ENCODE measurements at regions of chr15 and their contacts with region 1.

Region 1: DNA sequence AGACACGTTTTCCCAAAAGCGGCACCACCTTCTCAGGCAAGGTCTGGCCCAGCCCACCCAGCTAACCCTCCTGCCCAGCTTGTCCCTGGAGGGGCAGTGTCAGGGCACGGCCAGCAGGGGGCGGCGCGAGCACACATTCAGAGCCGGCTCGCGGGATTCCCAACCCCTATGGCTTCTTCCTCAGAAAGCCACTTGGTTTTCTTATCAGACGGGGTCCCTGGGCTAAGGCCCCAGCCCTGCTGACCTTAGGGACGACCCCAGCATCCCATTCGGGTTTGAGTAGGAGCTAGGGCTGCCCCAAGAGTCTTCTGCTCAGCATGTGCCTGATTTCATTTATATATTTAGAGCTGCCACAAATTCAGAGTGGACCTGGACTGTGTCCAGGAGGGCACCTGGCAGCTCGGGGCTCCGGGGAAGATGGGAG is 14.5 kb downstream of the RLBP1 start:
- DNase-seq: peak; percentile 93
- H3K4me3 ChIP-seq: peak overlapping the region; percentile 32 to 36; a peak in 3 of 4 replicates
- H3K27ac ChIP-seq: no peak overlapping the region
- H3K4me1 ChIP-seq: no peaks in the 10 kb centered on the region; a peak in 1 of 4 replicates
- H3K27me3 ChIP-seq: no peaks in the 10 kb centered on the region
- CTCF ChIP-seq: peak; percentile 96
- EP300 ChIP-seq: no peak
- RAD21 ChIP-seq: peak; percentile 85

Region 2: DNA sequence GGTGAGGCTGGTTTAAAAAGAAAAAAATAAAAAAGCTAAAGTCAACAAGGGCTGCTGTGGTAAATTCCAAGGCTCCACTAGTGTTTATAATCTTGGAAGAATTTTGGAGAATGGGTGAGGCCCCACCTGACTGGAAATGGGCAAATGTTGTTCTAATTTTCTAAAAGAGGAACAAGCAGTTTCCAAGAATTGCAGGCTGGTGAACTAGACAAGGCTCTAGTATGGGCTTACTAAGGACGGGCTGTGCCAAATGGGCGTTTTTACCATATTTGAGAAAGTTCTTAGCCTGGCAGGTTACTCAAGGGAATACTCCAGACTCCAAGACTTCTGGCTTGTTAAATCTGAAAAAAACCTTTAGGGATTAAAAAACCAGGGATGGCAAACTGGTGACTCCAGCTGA is 185.7 kb before region 1 on chr15:
- CTCF ChIA-PET with region 1: no interaction called
- POLR2A ChIA-PET with region 1: no interaction called
- DNase-seq: no peak
- H3K4me3 ChIP-seq: no peak overlapping the region
- H3K27ac ChIP-seq: no peak overlapping the region
- H3K4me1 ChIP-seq: peaks cover 0 to 11% of the 10 kb centered on the region in 2 experiments; a peak in 1 of 4 replicates
- H3K27me3 ChIP-seq: no peaks in the 10 kb centered on the region
- CTCF ChIP-seq: no peak
- EP300 ChIP-seq: no peak
- RAD21 ChIP-seq: no peak

Region 3: DNA sequence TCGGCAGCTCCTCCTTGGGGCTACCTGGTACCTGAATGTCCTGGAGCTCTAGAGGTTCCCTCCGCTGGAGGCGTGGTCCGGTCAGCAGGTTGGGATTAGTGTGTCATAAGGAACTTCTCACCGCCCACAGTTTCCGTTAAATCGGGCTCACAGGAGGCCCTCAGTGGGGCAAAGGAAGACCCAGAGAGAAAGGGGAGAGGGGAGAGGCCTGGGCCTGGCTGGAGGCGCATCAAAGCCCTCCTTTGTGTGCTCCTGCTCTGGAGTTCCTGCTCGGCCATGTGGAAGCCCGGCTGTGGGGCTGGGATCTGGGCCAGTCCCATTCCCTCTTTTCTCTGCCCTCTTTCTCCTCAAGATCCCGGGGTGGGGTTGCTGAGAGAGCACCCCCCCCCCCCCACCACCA is 14.6 kb after region 1 on chr15 and contains the start of gene RLBP1:
- CTCF ChIA-PET with region 1: interaction called, 56 read pairs
- POLR2A ChIA-PET with region 1: no interaction called
- DNase-seq: no peak
- H3K4me3 ChIP-seq: no peak within 1 kb of the TSS
- H3K27ac ChIP-seq: no peak within 1 kb of the TSS
- H3K4me1 ChIP-seq: no peaks in the 10 kb centered on the region
- H3K27me3 ChIP-seq: no peaks in the 10 kb centered on the region; the same call in 1 of the 2 replicates
- CTCF ChIP-seq: no peak
- EP300 ChIP-seq: no peak
- RAD21 ChIP-seq: no peak
- polyA plus RNA-seq, gene RLBP1: not detected in 2 replicates

Region 4: GRCh38 chr15:89243691-89244471 is 37.0 kb after region 1 on chr15 and contains the start of gene FANCI:
- CTCF ChIA-PET with region 1: interaction called, 41 read pairs
- POLR2A ChIA-PET with region 1: interaction called, 5 read pairs
- DNase-seq: peak; percentile 96
- H3K4me3 ChIP-seq: peak within 1 kb of the TSS; percentile 68 to 89
- H3K27ac ChIP-seq: peak within 1 kb of the TSS; percentile 43 to 72; a peak in 3 of 4 replicates
- H3K4me1 ChIP-seq: peaks cover 4 to 10% of the 10 kb centered on the region in 2 experiments; a peak in 3 of 4 replicates
- H3K27me3 ChIP-seq: no peaks in the 10 kb centered on the region
- CTCF ChIP-seq: peak; percentile 57
- EP300 ChIP-seq: no peak; a peak in 1 of 4 replicates
- RAD21 ChIP-seq: peak; percentile 60
- polyA plus RNA-seq, gene FANCI: 13.2 and 15.4 TPM in 2 replicates

Region 5: DNA sequence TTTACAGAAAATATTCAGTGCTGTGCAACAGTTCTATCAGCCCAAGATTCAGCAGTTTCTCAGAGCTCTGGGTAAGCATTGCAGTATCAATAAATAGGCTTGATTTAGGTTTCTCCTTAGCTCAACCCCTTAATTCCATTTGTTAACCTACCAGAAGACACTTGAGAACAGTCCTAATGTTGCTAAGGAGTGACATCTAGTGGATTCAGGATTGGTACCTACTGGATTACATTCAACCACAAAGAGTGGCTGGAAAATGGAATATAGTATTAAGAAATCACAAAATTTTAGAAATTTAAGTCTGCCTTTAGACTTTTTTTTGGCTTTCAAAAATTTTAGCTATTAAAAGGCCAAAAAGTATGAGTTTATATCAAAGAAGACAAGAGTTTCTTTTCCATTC is 93.0 kb after region 1 on chr15:
- CTCF ChIA-PET with region 1: interaction called, 19 read pairs
- POLR2A ChIA-PET with region 1: no interaction called
- DNase-seq: no peak
- H3K4me3 ChIP-seq: no peak overlapping the region
- H3K27ac ChIP-seq: no peak overlapping the region
- H3K4me1 ChIP-seq: no peaks in the 10 kb centered on the region
- H3K27me3 ChIP-seq: no peaks in the 10 kb centered on the region
- CTCF ChIP-seq: peak; percentile 49
- EP300 ChIP-seq: no peak
- RAD21 ChIP-seq: peak; percentile 55

Region 6: GRCh38 chr15:89321521-89322410 is 114.8 kb after region 1 on chr15:
- CTCF ChIA-PET with region 1: interaction called, 17 read pairs
- POLR2A ChIA-PET with region 1: no interaction called
- DNase-seq: peak; percentile 50
- H3K4me3 ChIP-seq: no peak overlapping the region
- H3K27ac ChIP-seq: no peak overlapping the region
- H3K4me1 ChIP-seq: no peaks in the 10 kb centered on the region
- H3K27me3 ChIP-seq: no peaks in the 10 kb centered on the region
- CTCF ChIP-seq: no peak
- EP300 ChIP-seq: no peak
- RAD21 ChIP-seq: no peak

Region 7: GRCh38 chr15:89587952-89588351 is 381.0 kb after region 1 on chr15:
- CTCF ChIA-PET with region 1: no interaction called
- POLR2A ChIA-PET with region 1: no interaction called
- DNase-seq: no peak
- H3K4me3 ChIP-seq: no peak overlapping the region
- H3K27ac ChIP-seq: peak overlapping the region in 1 of 2 experiments; percentile 14; a peak in 1 of 4 replicates
- H3K4me1 ChIP-seq: peaks cover 0 to 18% of the 10 kb centered on the region in 2 experiments; a peak in 2 of 4 replicates
- H3K27me3 ChIP-seq: no peaks in the 10 kb centered on the region
- CTCF ChIP-seq: no peak
- EP300 ChIP-seq: no peak
- RAD21 ChIP-seq: no peak

Measured in SK-N-SH (cell line).